ENCODE measurements at regions of chr15 and their contacts with region 1.

Region 1: GRCh38 chr15:45402162-45402954 is 24.0 kb upstream of the GATM start:
- DNase-seq: peak; percentile 93
- ATAC-seq: peak; percentile 97
- H3K4me3 Mint-ChIP-seq: peak overlapping the region; percentile 98
- H3K27ac Mint-ChIP-seq: peak overlapping the region; percentile 89
- H3K4me1 Mint-ChIP-seq: peaks cover 26% of the 10 kb centered on the region
- H3K27me3 Mint-ChIP-seq: no peaks in the 10 kb centered on the region

Region 2: GRCh38 chr15:45198337-45199135 is 203.8 kb before region 1 on chr15:
- POLR2A ChIA-PET with region 1: interaction called, 32 read pairs
- DNase-seq: peak; percentile 89
- ATAC-seq: peak; percentile 77
- H3K4me3 Mint-ChIP-seq: no peak overlapping the region
- H3K27ac Mint-ChIP-seq: no peak overlapping the region
- H3K4me1 Mint-ChIP-seq: peaks cover 14% of the 10 kb centered on the region
- H3K27me3 Mint-ChIP-seq: peaks cover 6% of the 10 kb centered on the region

Region 3: DNA sequence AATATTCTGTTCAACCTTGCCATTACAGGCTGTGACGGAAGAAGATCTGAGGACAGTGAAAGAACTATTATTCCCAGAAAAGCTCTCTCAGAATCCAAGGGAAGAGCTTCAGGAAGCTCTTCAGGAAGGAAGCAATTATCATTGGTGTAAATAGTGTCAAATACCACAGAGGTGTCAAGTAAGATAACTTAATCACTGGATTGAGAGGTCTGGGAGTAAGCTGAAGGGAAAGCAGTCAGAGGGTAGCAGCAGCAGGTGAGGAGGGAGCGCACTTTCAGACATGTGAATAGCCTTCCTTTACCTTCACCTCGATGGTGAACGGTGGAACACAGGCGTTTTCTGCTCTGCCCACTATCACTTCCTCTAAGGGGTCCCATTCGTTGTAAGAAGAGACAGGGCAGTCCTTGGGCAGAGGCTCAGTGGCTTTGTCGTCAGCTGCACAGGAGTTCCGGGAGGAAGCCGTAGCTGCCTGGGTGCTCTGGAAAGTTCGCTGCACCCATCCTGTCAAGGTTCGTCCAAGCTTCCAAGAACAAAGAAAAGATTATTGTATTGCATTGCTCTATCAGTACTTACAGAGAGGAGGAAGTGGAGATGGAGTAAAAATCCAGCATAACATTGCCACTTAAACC is 25.9 kb before region 1 on chr15:
- POLR2A ChIA-PET with region 1: no interaction called
- DNase-seq: no peak
- ATAC-seq: no peak
- H3K4me3 Mint-ChIP-seq: peak overlapping the region; percentile 41
- H3K27ac Mint-ChIP-seq: no peak overlapping the region
- H3K4me1 Mint-ChIP-seq: peaks cover 12% of the 10 kb centered on the region
- H3K27me3 Mint-ChIP-seq: peaks cover 51% of the 10 kb centered on the region

Region 4: GRCh38 chr15:45414215-45414885 is 12.0 kb after region 1 on chr15:
- POLR2A ChIA-PET with region 1: interaction called, 14 read pairs
- DNase-seq: no peak
- ATAC-seq: no peak
- H3K4me3 Mint-ChIP-seq: peak overlapping the region; percentile 5
- H3K27ac Mint-ChIP-seq: no peak overlapping the region
- H3K4me1 Mint-ChIP-seq: peaks cover 20% of the 10 kb centered on the region
- H3K27me3 Mint-ChIP-seq: no peaks in the 10 kb centered on the region

Region 5: DNA sequence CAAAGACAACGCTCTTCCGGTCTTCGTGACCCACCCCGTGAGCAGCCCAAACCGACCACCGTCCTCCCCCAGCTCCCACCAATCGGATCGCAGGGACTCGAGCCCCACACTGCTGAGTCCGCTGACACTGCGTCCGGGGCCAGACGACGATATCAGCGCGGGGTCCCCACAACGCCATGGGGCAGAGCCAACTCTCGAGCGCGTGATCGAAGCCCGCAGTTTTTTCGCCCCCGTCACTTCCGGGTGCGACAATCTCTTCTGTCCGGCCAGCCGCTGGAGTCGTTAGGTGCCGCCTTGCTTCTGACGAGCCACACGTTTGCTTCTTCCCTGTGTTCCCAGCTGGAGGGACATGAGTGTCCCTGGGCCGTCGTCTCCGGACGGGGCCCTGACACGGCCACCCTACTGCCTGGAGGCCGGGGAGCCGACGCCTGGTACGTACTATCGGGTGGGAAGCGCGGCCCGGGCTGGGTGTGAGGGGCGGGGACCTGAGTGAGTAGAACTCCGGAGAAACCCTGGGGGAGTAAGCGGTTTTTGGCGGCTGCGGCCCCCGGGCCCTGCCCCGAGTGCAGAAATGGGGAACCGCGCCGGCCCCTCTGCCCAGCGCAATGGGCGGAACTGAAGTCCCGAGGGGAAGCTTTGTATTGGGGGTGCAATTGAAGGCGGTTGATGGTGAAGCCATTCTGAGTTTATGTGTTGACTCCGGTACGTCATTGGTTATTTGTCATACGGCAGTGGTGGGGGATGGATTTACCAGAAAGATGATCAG is 184.9 kb after region 1 on chr15 and contains the start of gene BLOC1S6:
- POLR2A ChIA-PET with region 1: interaction called, 28 read pairs
- DNase-seq: peak; percentile 92
- ATAC-seq: peak; percentile 90
- H3K4me3 Mint-ChIP-seq: peak within 1 kb of the TSS; percentile 97
- H3K27ac Mint-ChIP-seq: peak within 1 kb of the TSS; percentile 100
- H3K4me1 Mint-ChIP-seq: peaks cover 34% of the 10 kb centered on the region
- H3K27me3 Mint-ChIP-seq: no peaks in the 10 kb centered on the region
- total RNA-seq, gene BLOC1S6: 40.1 to 40.6 TPM